CD4-positive, alpha-beta T cell (primary cell): ENCODE measurements at regions of chr6 and their contacts with region 1.

Region 1: DNA sequence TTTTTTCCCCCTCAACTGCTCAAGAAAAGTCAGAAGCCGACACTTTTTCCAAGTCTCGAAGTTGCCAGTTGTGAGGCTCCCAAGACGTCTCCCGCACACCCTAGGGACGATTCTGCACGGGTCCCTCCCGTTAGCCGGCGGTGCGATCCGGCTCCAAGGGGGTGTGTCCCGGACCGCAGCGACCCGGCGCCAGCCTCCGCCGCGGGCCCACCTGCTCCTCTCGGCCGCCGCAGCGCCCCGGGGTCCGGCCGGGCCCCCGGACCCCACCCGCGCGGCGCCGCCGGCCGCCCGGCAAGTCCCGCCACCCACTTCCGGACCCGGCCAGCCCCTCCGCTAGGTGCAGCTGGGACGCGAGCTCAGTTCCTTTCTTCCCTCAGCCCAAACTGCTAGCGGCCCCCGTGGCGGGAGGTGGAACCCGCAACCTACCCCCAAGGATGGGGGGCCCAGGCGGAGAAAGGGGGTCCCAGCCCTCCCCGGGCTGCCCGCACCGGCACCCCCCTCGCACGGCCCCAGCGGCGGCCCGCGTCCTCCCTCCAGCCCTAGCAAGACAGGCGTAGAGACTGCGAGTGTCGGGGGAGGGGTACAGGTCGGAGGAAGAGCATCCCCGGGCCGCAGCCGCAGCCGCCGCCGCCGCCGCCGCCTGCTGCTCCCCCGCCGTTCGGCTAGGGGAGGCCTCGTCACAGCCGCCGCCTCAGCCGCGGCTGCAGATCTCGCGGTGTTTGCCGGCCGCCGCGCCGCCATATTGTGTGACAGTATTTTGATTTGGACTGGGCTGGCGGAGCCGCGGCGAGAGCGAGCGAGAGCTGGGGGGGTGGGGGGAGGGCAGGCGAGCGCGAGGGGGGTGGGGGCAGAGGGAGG is 485 bp upstream of the TAB2 start:
- DNase-seq: peak; percentile 83 to 97 (median 88)
- ATAC-seq: peak; percentile 74
- H3K4me3 ChIP-seq: peak overlapping the region; percentile 73
- H3K4me3 Mint-ChIP-seq: peak overlapping the region; percentile 88
- H3K27ac ChIP-seq: peak overlapping the region; percentile 67 to 95
- H3K27ac Mint-ChIP-seq: peak overlapping the region; percentile 86
- H3K4me1 ChIP-seq: peaks cover 10% of the 10 kb centered on the region
- H3K4me1 Mint-ChIP-seq: peaks cover 49% of the 10 kb centered on the region
- H3K27me3 ChIP-seq: no peaks in the 10 kb centered on the region
- H3K27me3 Mint-ChIP-seq: no peaks in the 10 kb centered on the region
- CTCF ChIP-seq: no peak

Region 2: GRCh38 chr6:147970975-147971374 is 1346.1 kb before region 1 on chr6:
- CTCF ChIA-PET with region 1: no interaction called
- POLR2A ChIA-PET with region 1: no interaction called
- intact Hi-C with region 1: no loop called
- DNase-seq: no peak
- ATAC-seq: no peak
- H3K4me3 ChIP-seq: no peak overlapping the region
- H3K4me3 Mint-ChIP-seq: no peak overlapping the region
- H3K27ac ChIP-seq: no peak overlapping the region
- H3K27ac Mint-ChIP-seq: no peak overlapping the region
- H3K4me1 ChIP-seq: no peaks in the 10 kb centered on the region
- H3K4me1 Mint-ChIP-seq: no peaks in the 10 kb centered on the region
- H3K27me3 ChIP-seq: no peaks in the 10 kb centered on the region
- H3K27me3 Mint-ChIP-seq: no peaks in the 10 kb centered on the region
- CTCF ChIP-seq: no peak

Region 3: GRCh38 chr6:149082286-149082707 is 234.7 kb before region 1 on chr6:
- CTCF ChIA-PET with region 1: interaction called, 4 read pairs
- POLR2A ChIA-PET with region 1: interaction called, 4 read pairs
- intact Hi-C with region 1: loop called (anchors 2 kb)
- DNase-seq: peak; percentile 76 to 95 (median 86)
- ATAC-seq: peak; percentile 92
- H3K4me3 ChIP-seq: no peak overlapping the region
- H3K4me3 Mint-ChIP-seq: no peak overlapping the region
- H3K27ac ChIP-seq: no peak overlapping the region
- H3K27ac Mint-ChIP-seq: no peak overlapping the region
- H3K4me1 ChIP-seq: peaks cover 15% of the 10 kb centered on the region
- H3K4me1 Mint-ChIP-seq: peaks cover 39% of the 10 kb centered on the region
- H3K27me3 ChIP-seq: no peaks in the 10 kb centered on the region
- H3K27me3 Mint-ChIP-seq: no peaks in the 10 kb centered on the region
- CTCF ChIP-seq: peak; percentile 90

Region 4: DNA sequence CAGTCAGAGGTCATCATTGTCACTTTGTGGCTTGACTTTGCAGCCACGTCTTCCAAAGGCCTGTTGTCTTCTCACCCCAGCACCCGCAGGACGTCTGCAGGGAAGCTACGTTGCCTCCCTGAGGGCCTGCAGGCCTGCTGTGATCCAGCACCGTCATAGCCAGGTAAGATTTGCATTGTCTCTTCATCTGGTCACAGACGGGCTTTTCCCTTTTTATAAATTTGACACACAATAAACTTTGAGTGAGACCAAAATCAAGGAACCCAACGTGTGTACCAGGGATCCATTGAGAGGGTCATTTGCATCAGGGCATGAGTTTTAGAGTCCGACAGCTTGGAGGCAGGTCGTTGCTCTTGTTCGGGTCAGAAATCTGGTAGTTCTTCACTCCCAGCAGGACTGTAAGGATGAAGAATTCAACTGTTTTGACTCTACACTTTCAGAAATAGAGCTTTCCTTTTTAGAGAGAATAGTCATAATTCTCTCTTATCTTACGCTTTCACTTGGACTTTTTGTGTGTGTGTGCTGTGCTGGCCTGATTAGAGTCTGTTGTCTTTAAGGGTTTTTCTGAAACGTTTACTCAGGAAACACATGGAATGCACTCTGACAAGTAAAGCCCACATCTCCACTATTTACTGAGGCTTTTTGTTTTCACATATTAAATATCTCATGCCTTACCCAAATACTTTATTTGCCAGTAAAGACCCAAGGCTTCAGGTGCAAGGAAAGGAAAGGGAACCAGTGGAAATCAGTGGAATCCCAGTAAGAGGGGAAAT is 176.7 kb before region 1 on chr6:
- CTCF ChIA-PET with region 1: interaction called, 3 read pairs
- POLR2A ChIA-PET with region 1: interaction called, 4 read pairs
- intact Hi-C with region 1: loop called in 1 of 2 experiments (anchors 5 kb)
- DNase-seq: peak; percentile 10 to 90 (median 48)
- ATAC-seq: peak; percentile 71
- H3K4me3 ChIP-seq: peak overlapping the region; percentile 13
- H3K4me3 Mint-ChIP-seq: peak overlapping the region; percentile 64
- H3K27ac ChIP-seq: peak overlapping the region; percentile 91 to 94
- H3K27ac Mint-ChIP-seq: peak overlapping the region; percentile 99
- H3K4me1 ChIP-seq: peaks cover 29% of the 10 kb centered on the region
- H3K4me1 Mint-ChIP-seq: peaks cover 39% of the 10 kb centered on the region
- H3K27me3 ChIP-seq: no peaks in the 10 kb centered on the region
- H3K27me3 Mint-ChIP-seq: no peaks in the 10 kb centered on the region
- CTCF ChIP-seq: no peak

Region 5: GRCh38 chr6:149147938-149148718 is 168.9 kb before region 1 on chr6:
- CTCF ChIA-PET with region 1: no interaction called
- POLR2A ChIA-PET with region 1: interaction called, 11 read pairs
- intact Hi-C with region 1: loop called in 1 of 2 experiments (anchors 5 kb)
- DNase-seq: peak in 5 of 14 experiments; percentile 15 to 83 (median 69)
- ATAC-seq: peak; percentile 90
- H3K4me3 ChIP-seq: no peak overlapping the region
- H3K4me3 Mint-ChIP-seq: peak overlapping the region; percentile 1
- H3K27ac ChIP-seq: peak overlapping the region; percentile 53 to 68
- H3K27ac Mint-ChIP-seq: peak overlapping the region; percentile 76
- H3K4me1 ChIP-seq: peaks cover 50% of the 10 kb centered on the region
- H3K4me1 Mint-ChIP-seq: peaks cover 55% of the 10 kb centered on the region
- H3K27me3 ChIP-seq: no peaks in the 10 kb centered on the region
- H3K27me3 Mint-ChIP-seq: no peaks in the 10 kb centered on the region
- CTCF ChIP-seq: no peak

Region 6: GRCh38 chr6:149235130-149235561 is 81.9 kb before region 1 on chr6:
- CTCF ChIA-PET with region 1: interaction called, 4 read pairs
- POLR2A ChIA-PET with region 1: interaction called, 4 read pairs
- intact Hi-C with region 1: loop called (anchors 1 to 5 kb)
- DNase-seq: peak in 2 of 14 experiments; percentile 46 to 47
- ATAC-seq: no peak
- H3K4me3 ChIP-seq: no peak overlapping the region
- H3K4me3 Mint-ChIP-seq: peak overlapping the region; percentile 13
- H3K27ac ChIP-seq: peak overlapping the region in 1 of 2 donors; percentile 87
- H3K27ac Mint-ChIP-seq: peak overlapping the region; percentile 87
- H3K4me1 ChIP-seq: peaks cover 35% of the 10 kb centered on the region
- H3K4me1 Mint-ChIP-seq: peaks cover 45% of the 10 kb centered on the region
- H3K27me3 ChIP-seq: no peaks in the 10 kb centered on the region
- H3K27me3 Mint-ChIP-seq: no peaks in the 10 kb centered on the region
- CTCF ChIP-seq: no peak

Region 7: DNA sequence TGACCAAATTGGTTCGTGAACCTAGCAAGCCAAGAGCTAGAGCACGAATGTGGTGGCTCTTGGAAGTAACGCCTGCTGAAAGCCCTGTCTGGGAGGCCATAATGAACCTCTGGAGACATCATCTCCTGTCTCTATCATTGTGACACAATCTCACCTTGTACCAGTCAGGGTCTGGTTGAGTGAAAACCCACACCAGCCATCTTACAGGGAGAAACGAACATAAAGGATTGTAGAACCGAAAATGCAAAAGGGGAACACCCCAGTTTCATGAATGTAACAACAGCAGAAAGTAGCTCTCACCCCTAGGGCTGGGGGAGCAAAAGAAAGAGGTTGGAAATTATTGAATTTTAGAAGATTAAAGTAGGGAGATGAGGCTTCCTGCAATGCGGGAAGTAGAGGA is 50.4 kb before region 1 on chr6:
- CTCF ChIA-PET with region 1: interaction called, 4 read pairs
- POLR2A ChIA-PET with region 1: interaction called, 3 read pairs
- intact Hi-C with region 1: loop called in 1 of 2 experiments (anchors 5 kb)
- DNase-seq: peak in 1 of 14 experiments; percentile 20
- ATAC-seq: no peak
- H3K4me3 ChIP-seq: no peak overlapping the region
- H3K4me3 Mint-ChIP-seq: no peak overlapping the region
- H3K27ac ChIP-seq: no peak overlapping the region
- H3K27ac Mint-ChIP-seq: no peak overlapping the region
- H3K4me1 ChIP-seq: peaks cover 38% of the 10 kb centered on the region
- H3K4me1 Mint-ChIP-seq: peaks cover 39% of the 10 kb centered on the region
- H3K27me3 ChIP-seq: no peaks in the 10 kb centered on the region
- H3K27me3 Mint-ChIP-seq: no peaks in the 10 kb centered on the region
- CTCF ChIP-seq: no peak

Region 8: GRCh38 chr6:149368065-149368464 is 51.0 kb after region 1 on chr6:
- CTCF ChIA-PET with region 1: no interaction called
- POLR2A ChIA-PET with region 1: interaction called, 16 read pairs
- intact Hi-C with region 1: loop called (anchors 2 to 5 kb)
- DNase-seq: peak in 1 of 14 experiments; percentile 22
- ATAC-seq: no peak
- H3K4me3 ChIP-seq: no peak overlapping the region
- H3K4me3 Mint-ChIP-seq: no peak overlapping the region
- H3K27ac ChIP-seq: no peak overlapping the region
- H3K27ac Mint-ChIP-seq: no peak overlapping the region
- H3K4me1 ChIP-seq: peaks cover 24% of the 10 kb centered on the region
- H3K4me1 Mint-ChIP-seq: peaks cover 26% of the 10 kb centered on the region
- H3K27me3 ChIP-seq: no peaks in the 10 kb centered on the region
- H3K27me3 Mint-ChIP-seq: no peaks in the 10 kb centered on the region
- CTCF ChIP-seq: no peak

Region 9: GRCh38 chr6:150293423-150294173 is 976.6 kb after region 1 on chr6:
- CTCF ChIA-PET with region 1: no interaction called
- POLR2A ChIA-PET with region 1: no interaction called
- intact Hi-C with region 1: no loop called
- DNase-seq: no peak
- ATAC-seq: no peak
- H3K4me3 ChIP-seq: no peak overlapping the region
- H3K4me3 Mint-ChIP-seq: no peak overlapping the region
- H3K27ac ChIP-seq: no peak overlapping the region
- H3K27ac Mint-ChIP-seq: no peak overlapping the region
- H3K4me1 ChIP-seq: no peaks in the 10 kb centered on the region
- H3K4me1 Mint-ChIP-seq: no peaks in the 10 kb centered on the region
- H3K27me3 ChIP-seq: no peaks in the 10 kb centered on the region
- H3K27me3 Mint-ChIP-seq: peaks cover 19% of the 10 kb centered on the region
- CTCF ChIP-seq: no peak